Activated T-helper 2 cell treated with anti-CD3 and anti-CD28 coated beads, Interferon-gamma antibody, Interleukin-2, Interleukin-4, amounts not matched to agents 10 μg/mL and 5 μg/mL and 100 μg/mL, durations not matched to agents 14 hours and 24 hours and 36 hours (primary cell): ENCODE measurements at regions of chr15 and their contacts with region 1.

Region 1: GRCh38 chr15:99104788-99105513 is at the start of gene SYNM:
- DNase-seq: peak; percentile 22
- H3K4me3 Mint-ChIP-seq: peak within 1 kb of the TSS; percentile 57
- H3K27ac Mint-ChIP-seq: no peak within 1 kb of the TSS
- H3K4me1 Mint-ChIP-seq: peaks cover 12% of the 10 kb centered on the region
- H3K27me3 Mint-ChIP-seq: peaks cover 55% of the 10 kb centered on the region
- total RNA-seq, gene SYNM: 0.46 and 0.55 TPM in 2 replicates

Region 2: DNA sequence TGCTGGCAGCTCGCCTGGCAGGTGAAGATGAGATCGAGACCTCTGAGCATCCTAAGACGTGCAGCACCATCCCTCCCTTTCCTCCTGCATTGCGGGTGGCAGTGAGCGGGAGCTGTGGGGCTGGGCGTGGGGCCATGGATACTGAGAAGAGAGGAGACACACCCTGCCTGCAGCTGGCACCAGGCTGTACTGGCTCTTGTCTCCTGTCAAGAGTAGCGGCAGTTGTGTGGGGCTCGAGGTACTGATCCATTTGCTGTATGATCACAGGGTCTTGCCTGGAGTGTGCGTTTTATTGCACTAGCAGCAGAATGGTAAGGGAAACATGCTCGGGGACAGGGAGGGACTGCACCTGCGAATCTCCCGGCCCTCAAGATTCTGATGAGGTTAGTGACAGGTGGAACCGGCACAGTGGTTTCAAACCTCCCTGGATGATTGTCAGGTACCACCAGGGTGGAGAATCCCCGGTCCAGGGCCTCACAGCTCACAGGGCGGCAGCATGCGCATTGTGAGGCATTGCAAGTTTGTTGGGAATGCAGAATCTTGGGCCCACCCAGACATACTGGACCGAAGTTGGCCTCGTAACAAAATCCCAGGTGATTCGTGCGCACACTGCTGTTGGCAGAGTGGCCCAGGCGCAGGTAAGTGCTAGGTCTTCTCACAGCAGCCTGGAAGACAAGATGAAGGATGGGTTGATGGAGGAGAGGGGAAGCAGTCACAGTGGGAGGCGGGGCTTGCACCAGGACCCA is 14.0 kb after region 1 on chr15:
- intact Hi-C with region 1: no loop called
- DNase-seq: no peak
- H3K4me3 Mint-ChIP-seq: no peak overlapping the region
- H3K27ac Mint-ChIP-seq: no peak overlapping the region
- H3K4me1 Mint-ChIP-seq: no peaks in the 10 kb centered on the region
- H3K27me3 Mint-ChIP-seq: no peaks in the 10 kb centered on the region

Region 3: DNA sequence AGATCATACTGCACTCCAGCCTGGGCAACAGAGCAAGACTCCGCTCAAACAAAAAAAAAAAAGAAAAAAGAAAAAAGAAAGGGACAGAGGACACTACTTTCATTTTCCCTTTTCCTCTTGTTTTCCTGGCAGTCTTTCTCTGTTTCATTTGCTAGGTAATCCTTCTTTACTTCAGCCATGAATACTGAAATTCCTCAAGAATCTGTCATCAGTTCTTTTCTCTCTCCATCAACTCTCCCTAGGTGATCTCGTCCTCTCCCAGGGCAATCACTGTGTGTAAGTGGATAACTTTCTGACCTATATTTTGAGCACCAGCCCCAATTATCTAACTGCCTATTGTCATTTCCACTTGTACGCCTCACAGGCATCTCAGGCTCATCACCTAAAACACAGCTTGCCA is 92.9 kb after region 1 on chr15:
- intact Hi-C with region 1: no loop called
- DNase-seq: no peak
- H3K4me3 Mint-ChIP-seq: no peak overlapping the region
- H3K27ac Mint-ChIP-seq: no peak overlapping the region
- H3K4me1 Mint-ChIP-seq: no peaks in the 10 kb centered on the region
- H3K27me3 Mint-ChIP-seq: no peaks in the 10 kb centered on the region

Region 4: DNA sequence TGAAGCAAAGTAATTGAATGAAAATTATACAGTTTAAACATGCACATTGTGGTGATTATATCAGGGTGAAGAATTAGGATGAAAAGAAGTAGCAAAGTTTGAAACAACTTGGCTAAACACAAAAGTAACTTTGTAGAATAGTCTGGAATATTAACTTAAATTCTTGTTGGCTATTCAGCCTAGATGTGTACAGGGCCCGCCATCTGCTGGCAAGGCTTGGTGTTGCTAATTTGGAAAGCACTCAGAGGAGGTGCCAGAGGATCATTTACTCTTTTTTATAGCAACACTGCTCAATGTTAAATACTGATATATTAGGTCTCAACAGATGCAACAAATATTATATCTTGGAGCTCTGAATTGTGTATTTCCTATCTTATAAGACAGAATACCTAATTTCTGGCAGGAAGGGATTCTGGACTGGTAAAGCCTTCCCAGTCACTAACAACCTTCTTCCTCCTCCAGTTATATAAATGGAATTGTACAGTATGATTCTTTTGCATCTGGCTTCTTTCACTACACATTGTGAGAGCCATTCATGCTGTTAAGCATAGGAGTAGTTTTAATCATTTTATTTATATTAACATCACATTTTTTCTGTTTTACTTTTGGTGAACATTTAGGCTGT is 108.3 kb after region 1 on chr15:
- intact Hi-C with region 1: loop called (anchors 1 kb)
- DNase-seq: peak; percentile 44
- H3K4me3 Mint-ChIP-seq: no peak overlapping the region
- H3K27ac Mint-ChIP-seq: no peak overlapping the region
- H3K4me1 Mint-ChIP-seq: no peaks in the 10 kb centered on the region
- H3K27me3 Mint-ChIP-seq: no peaks in the 10 kb centered on the region